ENCODE measurements at regions of chr19 and their contacts with region 1.

Region 1: GRCh38 chr19:54029930-54030490 is 33.7 kb downstream of the VSTM1 start:
- DNase-seq: peak in 8 of 9 experiments; percentile 32 to 66 (median 56)
- ATAC-seq: no peak
- H3K4me3 ChIP-seq: no peak overlapping the region
- H3K4me3 Mint-ChIP-seq: no peak overlapping the region
- H3K27ac ChIP-seq: no peak overlapping the region
- H3K27ac Mint-ChIP-seq: no peak overlapping the region
- H3K4me1 ChIP-seq: no peaks in the 10 kb centered on the region
- H3K4me1 Mint-ChIP-seq: no peaks in the 10 kb centered on the region
- H3K27me3 ChIP-seq: no peaks in the 10 kb centered on the region
- H3K27me3 Mint-ChIP-seq: peaks cover 24% of the 10 kb centered on the region
- CTCF ChIP-seq: peak; percentile 48

Region 2: DNA sequence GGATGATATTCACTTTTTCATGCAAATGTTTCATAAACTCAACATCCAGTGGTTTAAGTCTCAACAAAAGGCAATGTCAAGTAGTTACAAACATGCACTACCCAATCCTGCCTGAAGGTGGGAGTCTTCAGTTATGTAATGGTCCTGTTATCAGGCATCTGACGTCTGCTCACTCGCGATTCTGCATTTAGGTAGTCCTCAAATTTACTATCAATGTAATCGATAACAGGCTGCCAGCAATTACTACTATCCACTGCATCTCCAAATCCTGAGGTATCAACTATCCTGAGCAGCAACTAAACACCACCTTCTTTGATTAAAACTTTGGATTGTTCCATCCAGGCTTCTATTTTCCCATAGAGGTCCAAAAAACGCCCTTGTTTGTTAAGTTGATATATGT is 257.1 kb before region 1 on chr19:
- CTCF ChIA-PET with region 1: interaction called, 3 read pairs
- POLR2A ChIA-PET with region 1: no interaction called
- intact Hi-C with region 1: loop called in 1 of 2 experiments (anchors 5 kb)
- DNase-seq: peak; percentile 3 to 68 (median 45)
- ATAC-seq: no peak
- H3K4me3 ChIP-seq: no peak overlapping the region
- H3K4me3 Mint-ChIP-seq: no peak overlapping the region
- H3K27ac ChIP-seq: no peak overlapping the region
- H3K27ac Mint-ChIP-seq: no peak overlapping the region
- H3K4me1 ChIP-seq: no peaks in the 10 kb centered on the region
- H3K4me1 Mint-ChIP-seq: peaks cover 3% of the 10 kb centered on the region
- H3K27me3 ChIP-seq: no peaks in the 10 kb centered on the region
- H3K27me3 Mint-ChIP-seq: peaks cover 9% of the 10 kb centered on the region
- CTCF ChIP-seq: peak; percentile 73

Region 3: DNA sequence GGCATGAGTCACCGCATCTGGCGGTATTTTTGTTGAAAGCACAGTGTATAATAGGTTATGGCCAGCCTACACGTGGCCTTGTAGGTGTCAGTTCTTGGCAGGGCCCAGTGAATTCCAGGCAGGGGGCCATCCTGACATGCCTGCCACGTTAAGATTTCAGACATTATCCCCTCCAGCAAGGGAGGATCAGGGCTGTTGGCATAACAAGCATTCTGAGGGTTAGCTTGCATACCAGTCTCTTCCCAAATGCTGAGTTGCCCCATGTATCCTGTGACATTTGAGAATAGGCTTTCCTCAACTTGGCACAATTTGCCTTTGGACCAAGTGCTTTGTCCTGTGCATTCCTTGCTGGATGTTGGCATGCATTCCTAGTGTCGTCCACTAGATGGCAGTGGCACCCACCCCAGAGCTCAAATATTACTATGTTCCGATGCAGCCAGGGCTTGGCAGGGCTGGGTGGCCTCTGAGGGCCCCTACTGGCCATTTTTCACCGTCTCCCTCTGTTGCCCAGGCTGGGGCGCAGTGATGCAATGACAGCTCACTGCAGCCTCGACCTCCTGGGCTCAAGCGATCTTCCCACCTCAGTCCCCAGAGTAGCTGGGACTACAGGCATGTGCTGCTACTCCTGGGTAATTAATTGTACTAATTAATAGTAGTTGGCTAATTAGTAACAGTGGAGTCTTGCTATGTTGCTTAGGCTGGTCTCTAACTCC is 237.1 kb before region 1 on chr19:
- CTCF ChIA-PET with region 1: interaction called, 32 read pairs
- POLR2A ChIA-PET with region 1: no interaction called
- intact Hi-C with region 1: no loop called
- DNase-seq: peak; percentile 46 to 81 (median 68)
- ATAC-seq: peak; percentile 100
- H3K4me3 ChIP-seq: no peak overlapping the region
- H3K4me3 Mint-ChIP-seq: no peak overlapping the region
- H3K27ac ChIP-seq: no peak overlapping the region
- H3K27ac Mint-ChIP-seq: no peak overlapping the region
- H3K4me1 ChIP-seq: no peaks in the 10 kb centered on the region
- H3K4me1 Mint-ChIP-seq: no peaks in the 10 kb centered on the region
- H3K27me3 ChIP-seq: no peaks in the 10 kb centered on the region
- H3K27me3 Mint-ChIP-seq: peaks cover 2% of the 10 kb centered on the region
- CTCF ChIP-seq: peak; percentile 91

Region 4: DNA sequence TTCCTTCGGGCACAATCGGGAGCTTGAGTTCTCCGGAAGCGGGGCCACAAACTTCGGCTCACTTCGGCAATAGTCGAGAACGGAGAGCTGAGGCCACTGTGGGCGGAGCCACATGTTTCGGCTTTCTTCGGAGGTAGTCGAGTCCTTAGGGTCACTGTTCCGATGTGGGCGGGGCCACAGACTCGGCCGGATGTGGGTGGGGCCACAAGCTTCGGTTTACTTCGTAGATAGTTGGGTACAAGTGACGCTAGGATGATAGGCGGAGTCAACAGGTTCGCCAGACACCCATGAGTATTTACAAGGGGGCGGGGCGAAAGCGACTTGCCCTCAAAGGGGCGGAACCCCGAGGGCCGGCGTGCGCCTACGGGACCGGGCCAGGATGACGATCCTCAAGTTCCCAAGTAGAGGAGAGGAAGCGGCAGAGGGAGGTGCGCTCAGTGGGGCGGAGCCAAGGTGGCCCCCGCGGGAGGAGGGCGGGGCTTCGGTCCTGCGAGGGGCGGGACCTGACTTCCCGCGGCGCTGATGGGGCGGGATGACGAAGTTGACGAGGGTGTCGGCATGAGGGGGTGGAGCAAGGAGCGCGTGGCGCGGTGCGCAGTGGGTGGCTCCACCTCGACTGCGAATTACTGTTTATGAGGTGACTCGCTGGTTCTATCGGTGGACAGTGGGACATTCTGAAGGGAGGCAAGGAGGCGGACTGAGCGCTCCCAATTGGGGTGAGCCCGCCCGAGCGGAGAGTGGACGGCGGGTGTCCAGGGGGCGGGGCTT is 159.9 kb after region 1 on chr19:
- CTCF ChIA-PET with region 1: no interaction called
- POLR2A ChIA-PET with region 1: no interaction called
- intact Hi-C with region 1: no loop called
- DNase-seq: peak; percentile 99 to 100 (median 100)
- ATAC-seq: peak; percentile 62
- H3K4me3 ChIP-seq: peak overlapping the region; percentile 69 to 76
- H3K4me3 Mint-ChIP-seq: peak overlapping the region; percentile 91
- H3K27ac ChIP-seq: peak overlapping the region; percentile 100
- H3K27ac Mint-ChIP-seq: peak overlapping the region; percentile 100
- H3K4me1 ChIP-seq: peaks cover 22% of the 10 kb centered on the region
- H3K4me1 Mint-ChIP-seq: peaks cover 38% of the 10 kb centered on the region
- H3K27me3 ChIP-seq: no peaks in the 10 kb centered on the region
- H3K27me3 Mint-ChIP-seq: no peaks in the 10 kb centered on the region
- CTCF ChIP-seq: no peak

Region 5: GRCh38 chr19:54248016-54248601 is 218.1 kb after region 1 on chr19:
- CTCF ChIA-PET with region 1: no interaction called
- POLR2A ChIA-PET with region 1: no interaction called
- intact Hi-C with region 1: no loop called
- DNase-seq: peak in 1 of 9 experiments; percentile 43
- ATAC-seq: peak; percentile 38
- H3K4me3 ChIP-seq: no peak overlapping the region
- H3K4me3 Mint-ChIP-seq: peak overlapping the region; percentile 13
- H3K27ac ChIP-seq: no peak overlapping the region
- H3K27ac Mint-ChIP-seq: no peak overlapping the region
- H3K4me1 ChIP-seq: peaks cover 12% of the 10 kb centered on the region
- H3K4me1 Mint-ChIP-seq: peaks cover 9% of the 10 kb centered on the region
- H3K27me3 ChIP-seq: peaks cover 0 to 4% of the 10 kb centered on the region in 2 experiments
- H3K27me3 Mint-ChIP-seq: peaks cover 3% of the 10 kb centered on the region
- CTCF ChIP-seq: no peak